ENCODE measurements at regions of chr14 and their contacts with region 1.

Region 1: DNA sequence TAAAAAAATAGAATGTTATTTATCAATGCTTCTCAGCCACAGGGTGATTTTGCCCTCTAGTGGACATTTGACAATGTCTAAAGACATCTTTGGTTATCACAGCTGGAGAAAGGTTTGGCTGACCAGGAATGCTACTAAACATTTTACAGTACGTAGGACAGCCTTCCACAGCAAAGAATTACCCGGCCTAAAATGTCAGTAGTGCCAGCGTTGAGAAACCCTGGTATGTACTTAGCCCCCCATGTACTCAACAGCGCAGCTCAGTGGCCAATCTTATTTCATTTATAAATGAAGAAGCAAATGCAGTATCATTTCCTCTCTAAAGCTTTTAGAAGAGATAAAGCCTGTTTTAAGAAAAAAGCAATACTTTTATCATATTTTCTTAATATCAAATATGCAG is 5.8 kb downstream of the MARK3 start:
- DNase-seq: peak; percentile 68
- H3K4me3 Mint-ChIP-seq: no peak overlapping the region
- H3K27ac Mint-ChIP-seq: no peak overlapping the region
- H3K4me1 Mint-ChIP-seq: peaks cover 30% of the 10 kb centered on the region
- H3K27me3 Mint-ChIP-seq: no peaks in the 10 kb centered on the region
- CTCF ChIP-seq: peak; percentile 65

Region 2: DNA sequence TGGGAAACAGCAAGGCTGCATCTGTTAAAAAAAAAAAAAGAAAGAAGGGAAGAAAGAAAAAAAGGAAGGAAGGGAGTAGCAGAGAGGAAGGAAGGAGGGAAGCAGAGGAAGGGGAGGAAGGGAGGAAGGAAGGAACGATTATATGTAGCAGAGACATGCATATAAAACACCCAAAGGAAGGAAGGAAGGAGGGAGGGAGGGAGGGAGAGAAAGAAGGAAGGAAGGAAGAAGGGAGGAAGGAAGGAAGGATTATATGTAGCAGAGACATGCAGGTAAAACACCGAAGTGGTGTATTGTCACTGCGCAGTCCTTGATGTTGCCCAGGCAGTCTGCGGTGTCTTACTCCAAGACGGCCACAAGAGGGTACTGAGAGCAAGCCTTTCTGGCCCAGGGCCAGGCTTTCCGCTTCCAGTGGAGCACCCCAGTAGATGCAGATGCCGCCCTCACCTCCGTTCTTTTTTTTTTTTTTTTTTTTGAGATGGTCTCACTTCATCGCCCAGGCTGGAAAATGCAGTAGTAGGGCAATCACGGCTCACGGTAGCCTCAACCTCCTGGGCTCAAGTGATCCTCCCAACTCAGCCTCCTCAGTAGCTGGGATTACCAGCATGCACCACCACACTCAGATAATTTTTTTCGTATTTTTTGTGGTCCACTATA is 312.8 kb before region 1 on chr14:
- CTCF ChIA-PET with region 1: interaction called, 20 read pairs
- POLR2A ChIA-PET with region 1: interaction called, 3 read pairs
- intact Hi-C with region 1: loop called (anchors 5 kb)
- DNase-seq: peak; percentile 86
- H3K4me3 Mint-ChIP-seq: no peak overlapping the region
- H3K27ac Mint-ChIP-seq: no peak overlapping the region
- H3K4me1 Mint-ChIP-seq: peaks cover 6% of the 10 kb centered on the region
- H3K27me3 Mint-ChIP-seq: no peaks in the 10 kb centered on the region
- CTCF ChIP-seq: peak; percentile 62

Region 3: DNA sequence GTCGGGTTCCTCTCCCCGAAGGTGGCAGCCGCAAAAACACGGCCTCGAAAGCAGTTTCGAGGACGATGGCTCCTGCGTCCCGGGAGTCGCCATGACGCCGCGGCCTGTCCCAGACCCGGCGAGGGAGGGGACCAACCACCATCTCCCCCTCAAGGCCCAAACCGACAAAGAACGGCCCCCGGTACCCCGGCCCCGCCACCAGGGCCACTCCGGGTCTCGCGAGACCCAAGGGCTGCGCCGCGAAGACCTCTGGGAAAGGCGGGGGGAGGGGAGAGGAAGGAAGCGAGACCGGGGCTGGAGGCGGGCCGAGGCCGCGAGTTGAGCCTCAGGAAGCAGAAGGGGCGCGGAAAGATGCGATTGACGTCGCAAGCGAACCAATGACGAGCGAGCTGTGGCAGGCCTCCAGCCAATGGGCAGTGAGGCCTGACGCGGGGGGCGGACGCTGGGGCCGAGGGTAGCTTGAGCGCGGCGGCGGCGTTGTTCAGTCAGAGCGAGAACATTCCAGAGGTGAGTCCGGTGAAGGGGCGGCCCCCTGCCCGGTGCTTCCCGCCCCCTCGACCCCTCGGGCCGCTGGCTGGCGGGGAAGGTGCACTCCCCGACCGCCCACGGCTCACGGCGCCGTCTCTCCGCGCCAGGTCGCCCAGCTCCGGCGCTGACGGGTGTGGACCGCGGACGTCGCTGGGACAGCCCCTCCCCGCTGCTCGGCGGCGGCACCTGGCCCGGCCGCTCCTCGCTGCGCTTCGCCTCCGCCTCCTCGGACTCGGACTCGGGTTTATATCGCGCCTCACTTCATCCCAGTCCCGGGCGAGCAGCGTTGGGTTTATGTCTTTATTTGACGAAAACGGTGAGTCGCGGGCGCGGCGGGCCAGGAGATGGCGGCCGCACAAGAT is 57.0 kb before region 1 on chr14 and contains the start of gene EIF5:
- CTCF ChIA-PET with region 1: interaction called, 36 read pairs
- POLR2A ChIA-PET with region 1: interaction called, 37 read pairs
- intact Hi-C with region 1: loop called (anchors 2 kb)
- DNase-seq: peak; percentile 98
- H3K4me3 Mint-ChIP-seq: peak within 1 kb of the TSS; percentile 89
- H3K27ac Mint-ChIP-seq: peak within 1 kb of the TSS; percentile 97
- H3K4me1 Mint-ChIP-seq: peaks cover 15% of the 10 kb centered on the region
- H3K27me3 Mint-ChIP-seq: no peaks in the 10 kb centered on the region
- CTCF ChIP-seq: peak; percentile 13
- total RNA-seq, gene EIF5: 149 and 327 TPM in 2 replicates

Region 4: DNA sequence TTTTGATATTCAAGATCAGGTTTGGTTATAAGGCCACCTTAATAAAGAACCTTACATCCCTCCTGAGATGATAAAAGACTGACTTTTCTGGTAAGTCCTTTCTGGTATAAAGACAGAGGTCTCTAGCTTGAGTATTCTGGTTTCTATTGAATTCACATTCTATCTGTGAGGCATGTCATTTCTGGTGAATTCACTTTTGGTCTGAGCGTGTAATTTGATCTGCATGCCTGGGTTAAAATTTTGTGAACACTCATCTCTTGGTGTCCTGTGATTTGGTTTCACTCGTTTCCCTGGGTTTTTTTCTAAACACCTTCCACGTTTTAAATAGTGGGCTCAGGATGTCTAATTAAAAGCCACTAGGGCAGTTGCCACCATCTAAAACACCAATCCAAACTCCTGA is 44.8 kb before region 1 on chr14:
- CTCF ChIA-PET with region 1: interaction called, 8 read pairs
- POLR2A ChIA-PET with region 1: interaction called, 16 read pairs
- intact Hi-C with region 1: no loop called
- DNase-seq: no peak
- H3K4me3 Mint-ChIP-seq: no peak overlapping the region
- H3K27ac Mint-ChIP-seq: no peak overlapping the region
- H3K4me1 Mint-ChIP-seq: no peaks in the 10 kb centered on the region
- H3K27me3 Mint-ChIP-seq: no peaks in the 10 kb centered on the region
- CTCF ChIP-seq: no peak

Region 5: DNA sequence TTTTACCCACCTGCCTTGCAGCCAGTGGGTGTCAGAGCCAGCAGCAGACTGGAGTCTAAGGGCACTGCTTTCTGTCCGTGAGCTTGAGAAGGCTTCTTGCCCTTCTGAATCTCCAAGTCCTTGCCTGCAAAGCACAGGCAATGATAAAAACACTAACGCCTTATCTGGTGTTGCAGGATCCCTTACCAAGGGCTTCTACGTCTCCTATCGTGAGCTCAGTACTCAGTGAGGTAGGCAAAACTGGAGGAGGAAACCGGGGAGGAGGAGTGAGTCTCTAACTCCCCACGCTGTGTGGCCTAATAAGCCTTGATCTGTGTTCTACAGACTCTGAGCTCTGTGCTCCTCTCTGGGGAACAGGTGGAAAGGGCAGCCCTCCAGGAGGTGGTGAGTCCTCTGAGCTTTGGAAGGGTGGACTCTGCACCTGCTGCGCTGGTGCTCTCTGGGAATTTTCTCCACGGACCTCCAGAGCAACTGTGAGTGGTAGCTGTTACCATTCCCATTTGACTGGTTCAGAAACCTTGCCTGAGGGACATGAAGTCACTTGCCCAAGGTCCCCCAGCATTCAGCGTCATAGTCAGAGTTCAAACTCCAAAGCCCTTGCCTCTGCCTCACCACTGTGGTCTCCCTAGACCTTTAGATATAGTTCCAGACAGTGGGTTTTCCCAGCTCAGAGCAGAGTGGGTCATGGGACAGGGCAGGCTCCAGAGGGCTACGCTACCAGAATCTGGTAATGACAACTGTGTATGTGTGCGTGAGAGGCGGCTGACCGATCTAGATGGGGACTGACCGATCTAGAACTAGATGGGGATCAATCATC is 12.8 kb before region 1 on chr14:
- CTCF ChIA-PET with region 1: interaction called, 36 read pairs
- POLR2A ChIA-PET with region 1: interaction called, 5 read pairs
- intact Hi-C with region 1: no loop called
- DNase-seq: no peak
- H3K4me3 Mint-ChIP-seq: no peak overlapping the region
- H3K27ac Mint-ChIP-seq: no peak overlapping the region
- H3K4me1 Mint-ChIP-seq: peaks cover 14% of the 10 kb centered on the region
- H3K27me3 Mint-ChIP-seq: no peaks in the 10 kb centered on the region
- CTCF ChIP-seq: no peak

Region 6: DNA sequence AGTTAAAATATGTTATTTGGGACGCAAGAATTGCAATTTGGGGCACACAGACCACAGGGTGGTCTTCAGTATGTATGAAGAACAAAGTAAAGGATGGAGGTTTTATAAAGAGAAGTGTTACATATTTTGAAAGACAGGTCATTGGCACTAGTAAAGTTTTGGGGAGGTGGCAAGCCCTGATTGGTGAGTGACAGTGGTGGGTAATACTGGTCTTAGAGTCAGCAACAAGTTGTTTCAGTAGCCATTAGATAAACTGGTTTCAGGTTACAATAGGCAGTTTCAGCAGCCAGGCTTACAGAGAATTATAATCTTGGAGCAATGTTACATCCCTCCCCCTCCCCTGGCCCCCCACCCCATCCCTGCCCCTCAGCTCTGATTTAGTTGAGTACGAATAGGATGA is 11.6 kb after region 1 on chr14:
- CTCF ChIA-PET with region 1: interaction called, 38 read pairs
- POLR2A ChIA-PET with region 1: interaction called, 27 read pairs
- intact Hi-C with region 1: no loop called
- DNase-seq: peak; percentile 47
- H3K4me3 Mint-ChIP-seq: no peak overlapping the region
- H3K27ac Mint-ChIP-seq: no peak overlapping the region
- H3K4me1 Mint-ChIP-seq: peaks cover 44% of the 10 kb centered on the region
- H3K27me3 Mint-ChIP-seq: no peaks in the 10 kb centered on the region
- CTCF ChIP-seq: no peak